B cell (primary cell): ENCODE measurements at regions of chrX and their contacts with region 1.

Region 1: GRCh38 chrX:154013614-154014360 is 5.9 kb downstream of the IRAK1 start:
- DNase-seq: peak; percentile 68
- ATAC-seq: peak; percentile 76
- H3K4me3 ChIP-seq: no peak overlapping the region
- H3K4me3 Mint-ChIP-seq: no peak overlapping the region
- H3K27ac ChIP-seq: no peak overlapping the region
- H3K27ac Mint-ChIP-seq: peak overlapping the region; percentile 32
- H3K4me1 ChIP-seq: peaks cover 2 to 26% of the 10 kb centered on the region in 2 donors
- H3K4me1 Mint-ChIP-seq: peaks cover 16% of the 10 kb centered on the region
- H3K27me3 ChIP-seq: no peaks in the 10 kb centered on the region
- H3K27me3 Mint-ChIP-seq: no peaks in the 10 kb centered on the region
- CTCF ChIP-seq: peak; percentile 81

Region 2: GRCh38 chrX:153935326-153935851 is 78.4 kb before region 1 on chrX:
- CTCF ChIA-PET with region 1: no interaction called
- POLR2A ChIA-PET with region 1: no interaction called
- intact Hi-C with region 1: no loop called
- DNase-seq: no peak
- ATAC-seq: no peak
- H3K4me3 ChIP-seq: peak overlapping the region in 4 of 5 experiments; percentile 25 to 55 (median 38)
- H3K4me3 Mint-ChIP-seq: peak overlapping the region; percentile 73
- H3K27ac ChIP-seq: no peak overlapping the region
- H3K27ac Mint-ChIP-seq: peak overlapping the region; percentile 59
- H3K4me1 ChIP-seq: peaks cover 6 to 15% of the 10 kb centered on the region in 2 donors
- H3K4me1 Mint-ChIP-seq: peaks cover 12% of the 10 kb centered on the region
- H3K27me3 ChIP-seq: no peaks in the 10 kb centered on the region
- H3K27me3 Mint-ChIP-seq: no peaks in the 10 kb centered on the region
- CTCF ChIP-seq: no peak

Region 3: DNA sequence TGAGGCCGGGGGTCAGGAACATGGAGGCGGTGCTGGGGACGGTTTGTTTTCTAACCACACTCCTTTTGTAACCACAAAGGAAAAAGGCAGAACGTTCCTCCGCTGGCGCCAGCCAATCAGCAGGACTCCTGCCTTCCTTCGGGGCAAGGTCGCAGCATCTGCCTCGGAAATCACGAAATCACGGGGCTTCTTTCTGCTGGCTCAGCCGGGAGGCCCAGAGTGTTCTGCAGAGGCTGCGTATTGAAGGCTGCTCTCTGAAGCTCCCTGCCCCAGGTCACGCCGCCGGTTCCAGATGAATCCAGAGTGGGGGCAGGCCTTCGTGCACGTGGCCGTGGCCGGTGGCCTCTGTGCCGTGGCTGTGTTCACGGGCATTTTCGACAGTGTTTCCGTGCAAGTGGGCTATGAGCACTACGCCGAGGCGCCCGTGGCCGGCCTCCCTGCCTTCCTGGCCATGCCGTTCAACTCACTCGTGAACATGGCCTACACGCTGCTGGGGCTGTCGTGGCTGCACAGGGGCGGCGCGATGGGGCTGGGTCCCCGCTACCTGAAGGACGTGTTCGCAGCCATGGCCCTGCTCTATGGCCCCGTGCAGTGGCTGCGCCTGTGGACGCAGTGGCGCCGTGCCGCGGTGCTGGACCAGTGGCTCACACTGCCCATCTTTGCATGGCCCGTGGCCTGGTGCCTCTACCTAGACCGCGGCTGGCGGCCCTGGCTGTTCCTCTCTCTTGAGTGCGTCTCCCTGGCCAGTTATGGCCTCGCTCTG is 31.8 kb before region 1 on chrX:
- CTCF ChIA-PET with region 1: interaction called, 21 read pairs
- POLR2A ChIA-PET with region 1: interaction called, 3 read pairs
- intact Hi-C with region 1: no loop called
- DNase-seq: peak; percentile 39
- ATAC-seq: no peak
- H3K4me3 ChIP-seq: peak overlapping the region in 2 of 5 experiments; percentile 9 to 24
- H3K4me3 Mint-ChIP-seq: peak overlapping the region; percentile 83
- H3K27ac ChIP-seq: peak overlapping the region; percentile 69 to 78
- H3K27ac Mint-ChIP-seq: peak overlapping the region; percentile 97
- H3K4me1 ChIP-seq: peaks cover 46 to 67% of the 10 kb centered on the region in 2 donors
- H3K4me1 Mint-ChIP-seq: peaks cover 50% of the 10 kb centered on the region
- H3K27me3 ChIP-seq: no peaks in the 10 kb centered on the region
- H3K27me3 Mint-ChIP-seq: no peaks in the 10 kb centered on the region
- CTCF ChIP-seq: no peak

Region 4: GRCh38 chrX:154051201-154051810 is 37.5 kb after region 1 on chrX:
- CTCF ChIA-PET with region 1: interaction called, 13 read pairs
- POLR2A ChIA-PET with region 1: no interaction called
- intact Hi-C with region 1: no loop called
- DNase-seq: peak; percentile 70
- ATAC-seq: peak; percentile 39
- H3K4me3 ChIP-seq: no peak overlapping the region
- H3K4me3 Mint-ChIP-seq: no peak overlapping the region
- H3K27ac ChIP-seq: peak overlapping the region in 1 of 2 donors; percentile 14
- H3K27ac Mint-ChIP-seq: peak overlapping the region; percentile 41
- H3K4me1 ChIP-seq: peaks cover 4 to 10% of the 10 kb centered on the region in 2 donors
- H3K4me1 Mint-ChIP-seq: peaks cover 16% of the 10 kb centered on the region
- H3K27me3 ChIP-seq: no peaks in the 10 kb centered on the region
- H3K27me3 Mint-ChIP-seq: no peaks in the 10 kb centered on the region
- CTCF ChIP-seq: peak; percentile 74

Region 5: GRCh38 chrX:154116426-154117211 is 102.8 kb after region 1 on chrX:
- CTCF ChIA-PET with region 1: no interaction called
- POLR2A ChIA-PET with region 1: no interaction called
- intact Hi-C with region 1: no loop called
- DNase-seq: no peak
- ATAC-seq: no peak
- H3K4me3 ChIP-seq: no peak overlapping the region
- H3K4me3 Mint-ChIP-seq: no peak overlapping the region
- H3K27ac ChIP-seq: no peak overlapping the region
- H3K27ac Mint-ChIP-seq: no peak overlapping the region
- H3K4me1 ChIP-seq: no peaks in the 10 kb centered on the region
- H3K4me1 Mint-ChIP-seq: peaks cover 4% of the 10 kb centered on the region
- H3K27me3 ChIP-seq: no peaks in the 10 kb centered on the region
- H3K27me3 Mint-ChIP-seq: no peaks in the 10 kb centered on the region
- CTCF ChIP-seq: no peak